ENCODE measurements at regions of chr2 and their contacts with region 1.

Region 1: GRCh38 chr2:64133828-64134227 is 10.4 kb downstream of the PELI1 start:
- DNase-seq: no peak
- ATAC-seq: peak; percentile 66
- H3K4me3 Mint-ChIP-seq: no peak overlapping the region
- H3K27ac Mint-ChIP-seq: peak overlapping the region; percentile 88
- H3K4me1 Mint-ChIP-seq: peaks cover 82% of the 10 kb centered on the region
- H3K27me3 Mint-ChIP-seq: no peaks in the 10 kb centered on the region
- CTCF ChIP-seq: no peak

Region 2: DNA sequence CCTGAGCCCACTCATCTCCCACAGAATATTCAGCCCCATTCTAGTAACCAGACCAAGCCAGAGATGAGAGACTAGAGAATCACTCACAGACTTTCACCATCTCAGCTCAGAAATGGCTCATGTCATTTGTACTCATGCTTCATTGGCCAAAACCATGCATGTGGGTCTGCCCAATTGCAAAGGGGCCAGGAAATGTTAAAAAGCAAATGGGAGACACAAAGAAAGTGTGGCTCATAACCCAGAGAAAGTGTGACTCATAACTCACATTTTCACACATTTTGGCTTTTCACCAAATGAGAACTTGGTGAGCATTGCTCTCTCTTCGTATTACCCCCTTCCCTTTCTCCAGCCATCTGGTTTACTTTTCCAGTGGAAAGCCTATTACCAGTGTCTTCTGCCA is 478.9 kb before region 1 on chr2:
- CTCF ChIA-PET with region 1: no interaction called
- POLR2A ChIA-PET with region 1: no interaction called
- intact Hi-C with region 1: no loop called
- DNase-seq: peak; percentile 59
- ATAC-seq: peak; percentile 98
- H3K4me3 Mint-ChIP-seq: no peak overlapping the region
- H3K27ac Mint-ChIP-seq: no peak overlapping the region
- H3K4me1 Mint-ChIP-seq: peaks cover 5% of the 10 kb centered on the region
- H3K27me3 Mint-ChIP-seq: no peaks in the 10 kb centered on the region
- CTCF ChIP-seq: no peak

Region 3: GRCh38 chr2:63993871-63994270 is 140.0 kb before region 1 on chr2:
- CTCF ChIA-PET with region 1: no interaction called
- POLR2A ChIA-PET with region 1: no interaction called
- intact Hi-C with region 1: no loop called
- DNase-seq: peak; percentile 18
- ATAC-seq: no peak
- H3K4me3 Mint-ChIP-seq: no peak overlapping the region
- H3K27ac Mint-ChIP-seq: no peak overlapping the region
- H3K4me1 Mint-ChIP-seq: peaks cover 15% of the 10 kb centered on the region
- H3K27me3 Mint-ChIP-seq: no peaks in the 10 kb centered on the region
- CTCF ChIP-seq: no peak

Region 4: GRCh38 chr2:64052468-64053241 is 81.2 kb before region 1 on chr2:
- CTCF ChIA-PET with region 1: interaction called, 10 read pairs
- POLR2A ChIA-PET with region 1: interaction called, 3 read pairs
- intact Hi-C with region 1: no loop called
- DNase-seq: no peak
- ATAC-seq: no peak
- H3K4me3 Mint-ChIP-seq: no peak overlapping the region
- H3K27ac Mint-ChIP-seq: no peak overlapping the region
- H3K4me1 Mint-ChIP-seq: peaks cover 40% of the 10 kb centered on the region
- H3K27me3 Mint-ChIP-seq: no peaks in the 10 kb centered on the region
- CTCF ChIP-seq: no peak

Region 5: DNA sequence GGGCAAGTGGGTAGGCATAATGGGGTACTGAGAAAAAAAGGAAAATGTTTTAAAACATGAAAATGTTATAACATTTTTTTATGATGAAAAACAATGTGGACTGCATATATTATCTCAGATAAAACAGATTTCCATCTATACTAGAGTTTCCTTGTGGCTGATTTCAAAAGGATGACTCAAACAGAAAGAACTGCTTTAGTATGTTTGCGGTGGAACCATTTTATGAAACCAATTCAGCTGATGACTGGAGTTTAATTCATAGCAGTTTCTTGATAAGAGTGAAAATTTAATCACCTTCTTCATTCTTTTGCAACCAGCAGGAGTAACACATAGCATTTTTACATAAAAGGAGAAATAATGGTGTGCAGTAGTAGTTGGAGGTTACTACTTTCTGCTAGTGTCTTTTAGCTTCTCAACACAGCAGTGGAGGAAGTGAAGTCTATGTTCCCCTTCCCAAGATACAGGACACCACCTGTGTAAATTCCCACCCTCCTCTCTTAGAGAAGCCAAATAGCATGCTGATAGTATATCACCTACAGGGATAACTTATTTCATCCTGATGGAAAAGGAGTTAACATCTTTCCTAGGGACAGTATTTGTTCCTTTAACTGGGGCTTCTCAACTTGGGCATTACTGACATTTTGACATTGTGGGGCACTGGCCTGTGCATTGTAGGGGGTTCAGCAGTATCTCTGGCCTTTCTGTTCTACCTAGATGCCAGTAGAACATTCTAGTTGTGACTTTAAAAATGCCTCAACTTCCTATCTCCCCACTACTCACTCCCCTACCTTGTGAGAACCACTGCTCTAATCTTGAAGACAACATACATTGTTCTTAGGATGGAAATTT is 19.5 kb before region 1 on chr2:
- CTCF ChIA-PET with region 1: interaction called, 5 read pairs
- POLR2A ChIA-PET with region 1: interaction called, 3 read pairs
- intact Hi-C with region 1: loop called (anchors 2 kb)
- DNase-seq: no peak
- ATAC-seq: peak; percentile 78
- H3K4me3 Mint-ChIP-seq: peak overlapping the region; percentile 9
- H3K27ac Mint-ChIP-seq: peak overlapping the region; percentile 91
- H3K4me1 Mint-ChIP-seq: peaks cover 77% of the 10 kb centered on the region
- H3K27me3 Mint-ChIP-seq: no peaks in the 10 kb centered on the region
- CTCF ChIP-seq: no peak

Region 6: DNA sequence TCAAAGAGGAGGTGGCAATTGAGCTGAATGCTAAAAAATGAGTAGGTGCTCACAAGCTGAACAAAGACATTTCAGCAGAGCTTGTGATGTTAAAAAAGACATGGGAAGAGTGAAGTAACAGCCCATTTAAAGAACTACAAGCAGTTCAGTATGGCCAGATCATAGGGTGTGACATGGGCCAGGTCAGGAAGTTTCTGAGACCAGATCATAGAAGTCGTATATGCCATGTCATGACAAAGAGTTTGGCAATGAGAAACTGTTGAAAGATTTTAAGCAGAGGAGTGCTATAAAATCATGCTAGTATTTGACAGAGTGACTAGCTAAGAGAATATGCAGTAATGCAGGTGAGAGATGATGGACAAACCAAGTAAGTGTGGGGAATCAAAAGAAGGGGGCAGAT is 17.6 kb after region 1 on chr2:
- CTCF ChIA-PET with region 1: no interaction called
- POLR2A ChIA-PET with region 1: no interaction called
- intact Hi-C with region 1: no loop called
- DNase-seq: no peak
- ATAC-seq: no peak
- H3K4me3 Mint-ChIP-seq: no peak overlapping the region
- H3K27ac Mint-ChIP-seq: no peak overlapping the region
- H3K4me1 Mint-ChIP-seq: no peaks in the 10 kb centered on the region
- H3K27me3 Mint-ChIP-seq: peaks cover 2% of the 10 kb centered on the region
- CTCF ChIP-seq: no peak

Region 7: GRCh38 chr2:64203858-64204632 is 70.2 kb after region 1 on chr2:
- CTCF ChIA-PET with region 1: no interaction called
- POLR2A ChIA-PET with region 1: interaction called, 5 read pairs
- intact Hi-C with region 1: loop called (anchors 2 kb)
- DNase-seq: peak; percentile 63
- ATAC-seq: peak; percentile 46
- H3K4me3 Mint-ChIP-seq: peak overlapping the region; percentile 64
- H3K27ac Mint-ChIP-seq: peak overlapping the region; percentile 92
- H3K4me1 Mint-ChIP-seq: peaks cover 71% of the 10 kb centered on the region
- H3K27me3 Mint-ChIP-seq: no peaks in the 10 kb centered on the region
- CTCF ChIP-seq: no peak

Measured in activated CD8-positive, alpha-beta T cell treated with anti-CD3 and anti-CD28 coated beads for 36 hours (primary cell).